Naive thymus-derived CD4-positive, alpha-beta T cell (primary cell): ENCODE measurements at regions of chr2 and their contacts with region 1.

Region 1: DNA sequence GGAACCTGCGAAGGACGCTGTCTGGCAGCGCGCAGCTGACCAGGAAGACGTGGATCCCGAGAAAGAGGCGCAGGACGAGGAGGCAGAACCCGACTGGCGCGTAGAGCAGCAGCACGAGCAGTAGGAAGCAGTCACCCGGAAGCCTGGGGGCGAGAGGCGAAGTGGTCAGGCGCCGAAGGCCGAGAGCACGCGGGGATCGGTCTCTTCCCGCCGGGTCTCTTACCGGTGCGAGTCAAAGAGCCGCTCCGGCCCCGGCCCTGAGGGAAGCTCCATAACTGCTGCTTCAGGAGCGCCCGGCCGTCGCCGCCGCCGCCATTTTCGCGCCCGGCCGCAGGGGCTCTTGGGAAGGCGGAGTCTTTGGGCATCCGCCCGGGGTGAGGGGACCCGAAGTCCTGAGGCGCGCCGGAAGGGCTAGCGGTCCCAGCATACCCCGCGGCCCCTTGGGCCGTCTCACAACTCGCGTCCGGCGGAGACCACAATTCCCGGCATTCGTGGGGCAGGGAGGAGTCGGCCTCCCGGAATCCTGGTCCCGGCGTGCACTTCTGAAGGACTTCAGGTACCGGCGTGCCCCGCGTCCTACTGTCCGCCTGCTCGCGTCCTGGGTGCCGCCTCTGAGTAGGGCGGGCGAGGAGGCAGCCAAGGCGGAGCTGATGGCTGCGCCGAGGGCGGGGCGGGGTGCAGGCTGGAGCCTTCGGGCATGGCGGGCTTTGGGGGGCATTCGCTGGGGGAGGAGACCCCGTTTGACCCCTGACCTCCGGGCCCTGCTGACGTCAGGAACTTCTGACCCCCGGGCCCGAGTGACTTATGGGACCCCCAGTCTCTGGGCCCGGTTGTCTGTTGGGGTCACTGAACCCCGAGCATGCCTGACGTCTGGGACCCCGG is at the starts of genes AUP1 and HTRA2:
- DNase-seq: peak; percentile 75 to 92 (median 83)
- ATAC-seq: peak; percentile 90
- H3K4me3 ChIP-seq: peak within 1 kb of the TSS; percentile 94
- H3K4me3 Mint-ChIP-seq: peak within 1 kb of the TSS; percentile 91 to 98 (median 94)
- H3K27ac ChIP-seq: peak within 1 kb of the TSS; percentile 85
- H3K27ac Mint-ChIP-seq: peak within 1 kb of the TSS; percentile 88 to 97 (median 93)
- H3K4me1 ChIP-seq: peaks cover 11 to 25% of the 10 kb centered on the region in 2 donors
- H3K4me1 Mint-ChIP-seq: peaks cover 25 to 50% (median 43%) of the 10 kb centered on the region in 7 donors
- H3K27me3 ChIP-seq: no peaks in the 10 kb centered on the region
- H3K27me3 Mint-ChIP-seq: no peaks in the 10 kb centered on the region
- total RNA-seq, gene AUP1: 121 to 160 (median 144) TPM
- total RNA-seq, gene HTRA2: 16.9 to 46.2 (median 37.7) TPM

Region 2: DNA sequence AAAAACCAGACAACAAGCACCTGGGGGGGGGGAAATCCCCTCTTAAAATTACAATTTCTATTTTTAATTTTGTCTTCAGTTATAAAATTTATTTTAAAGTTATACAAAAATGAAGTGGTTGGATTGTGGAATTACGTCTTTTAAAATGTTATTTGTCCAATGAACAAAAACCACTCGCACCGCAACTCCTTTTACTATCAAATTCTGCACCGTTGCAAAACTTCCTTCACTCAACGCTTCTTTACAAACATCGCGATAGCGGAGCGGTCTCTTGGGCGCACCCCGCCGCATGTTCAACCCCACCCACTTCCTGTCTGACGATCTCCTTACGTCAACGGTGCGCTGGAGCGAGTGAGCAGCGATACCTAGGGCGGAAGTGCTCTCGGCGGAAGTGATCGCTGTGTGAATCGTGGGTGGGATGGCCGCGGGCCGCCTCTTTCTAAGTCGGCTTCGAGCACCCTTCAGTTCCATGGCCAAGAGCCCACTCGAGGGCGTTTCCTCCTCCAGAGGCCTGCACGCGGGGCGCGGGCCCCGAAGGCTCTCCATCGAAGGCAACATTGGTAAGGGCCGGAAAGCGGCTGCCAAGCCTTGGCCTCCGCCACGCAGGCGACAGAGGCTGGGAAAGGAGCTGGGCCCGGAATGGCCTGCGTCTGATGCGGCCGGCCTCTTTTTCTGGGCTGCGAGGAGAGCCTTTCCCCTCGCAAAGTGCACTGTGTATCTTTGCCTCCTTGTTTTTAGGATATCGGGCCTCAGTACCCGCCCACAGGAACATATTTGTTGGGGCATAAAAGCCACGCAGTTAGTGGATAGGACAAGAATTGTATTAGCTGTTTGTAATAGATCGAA is 602.9 kb before region 1 on chr2 and contains the start of gene DGUOK:
- CTCF ChIA-PET with region 1: no interaction called
- POLR2A ChIA-PET with region 1: no interaction called
- intact Hi-C with region 1: loop called in 1 of 2 experiments (anchors 5 kb)
- DNase-seq: peak; percentile 81 to 99 (median 98)
- ATAC-seq: peak; percentile 99
- H3K4me3 ChIP-seq: peak within 1 kb of the TSS; percentile 87
- H3K4me3 Mint-ChIP-seq: peak within 1 kb of the TSS; percentile 80 to 97 (median 92)
- H3K27ac ChIP-seq: peak within 1 kb of the TSS; percentile 98
- H3K27ac Mint-ChIP-seq: peak within 1 kb of the TSS; percentile 79 to 99 (median 98)
- H3K4me1 ChIP-seq: peaks cover 37 to 41% of the 10 kb centered on the region in 2 donors
- H3K4me1 Mint-ChIP-seq: peaks cover 35 to 57% (median 52%) of the 10 kb centered on the region in 7 donors
- H3K27me3 ChIP-seq: no peaks in the 10 kb centered on the region
- H3K27me3 Mint-ChIP-seq: no peaks in the 10 kb centered on the region
- total RNA-seq, gene DGUOK: 43.1 to 73.9 (median 65.8) TPM

Region 3: DNA sequence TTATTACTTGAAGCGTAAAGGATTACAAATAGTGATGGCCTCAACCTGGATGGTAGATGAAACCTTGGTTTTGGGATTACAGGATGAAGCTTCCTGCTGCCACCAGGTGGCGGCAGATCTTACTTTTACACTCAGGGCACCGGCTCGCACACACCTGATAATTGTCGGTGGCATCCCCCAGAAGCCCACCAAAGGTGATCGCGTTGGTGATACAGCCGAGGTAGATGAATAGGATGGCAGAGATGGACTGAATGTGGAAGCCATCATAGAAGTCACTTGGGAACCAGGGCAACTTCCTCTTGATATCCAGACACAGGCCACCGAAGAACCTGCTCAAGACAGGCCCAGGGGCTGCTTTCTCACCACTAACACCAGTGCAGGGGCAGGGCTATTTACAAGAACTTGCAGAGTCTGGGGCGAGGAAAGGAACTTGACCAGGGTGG is 279.4 kb before region 1 on chr2:
- CTCF ChIA-PET with region 1: interaction called, 22 read pairs
- POLR2A ChIA-PET with region 1: no interaction called
- intact Hi-C with region 1: loop called (anchors 1 kb)
- DNase-seq: peak; percentile 33 to 65 (median 54)
- ATAC-seq: peak; percentile 70
- H3K4me3 ChIP-seq: no peak overlapping the region
- H3K4me3 Mint-ChIP-seq: peak overlapping the region in 1 of 10 donors; percentile 49
- H3K27ac ChIP-seq: no peak overlapping the region
- H3K27ac Mint-ChIP-seq: peak overlapping the region in 2 of 9 donors; percentile 62 to 84
- H3K4me1 ChIP-seq: no peaks in the 10 kb centered on the region
- H3K4me1 Mint-ChIP-seq: peaks cover 0 to 6% (median 0%) of the 10 kb centered on the region in 7 donors
- H3K27me3 ChIP-seq: no peaks in the 10 kb centered on the region
- H3K27me3 Mint-ChIP-seq: no peaks in the 10 kb centered on the region

Region 4: DNA sequence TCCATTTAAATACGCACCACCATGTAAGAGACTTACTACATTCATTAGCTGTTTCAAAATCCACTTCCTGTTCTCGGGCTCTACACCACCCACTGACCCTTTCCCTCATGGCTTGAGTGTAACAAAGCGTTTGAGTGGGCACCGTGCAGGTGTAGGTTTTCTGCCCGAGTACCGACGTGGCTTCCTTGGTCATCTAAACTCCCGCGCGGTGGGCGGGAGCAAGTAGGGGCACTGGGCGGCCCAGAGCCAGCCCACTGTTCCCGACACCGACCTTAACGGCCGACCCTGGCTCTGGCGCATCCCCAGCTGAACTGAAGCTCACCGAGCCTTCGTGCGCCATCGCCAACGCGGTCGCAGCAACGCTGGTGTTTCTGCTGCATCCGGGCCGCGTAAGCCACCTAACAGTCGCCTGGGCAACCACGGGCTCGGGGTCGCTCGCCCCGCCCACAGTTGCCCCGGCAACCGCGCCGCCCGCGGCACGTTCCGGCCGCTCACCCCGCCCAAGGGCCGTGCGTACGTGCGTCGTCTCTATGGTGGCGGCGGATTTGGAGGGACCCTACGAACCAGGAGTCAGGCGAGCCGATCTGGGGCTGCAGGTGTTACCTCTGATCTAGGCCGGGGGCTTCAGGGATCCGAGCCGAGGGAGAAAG is 108.3 kb before region 1 on chr2 and contains the starts of genes C2orf81 and WDR54:
- CTCF ChIA-PET with region 1: no interaction called
- POLR2A ChIA-PET with region 1: interaction called, 3 read pairs
- intact Hi-C with region 1: loop called (anchors 1 kb)
- DNase-seq: peak; percentile 86 to 96 (median 95)
- ATAC-seq: peak; percentile 97
- H3K4me3 ChIP-seq: peak within 1 kb of the TSS; percentile 96
- H3K4me3 Mint-ChIP-seq: peak within 1 kb of the TSS; percentile 90 to 100 (median 98)
- H3K27ac ChIP-seq: peak within 1 kb of the TSS; percentile 97
- H3K27ac Mint-ChIP-seq: peak within 1 kb of the TSS; percentile 96 to 100 (median 99)
- H3K4me1 ChIP-seq: peaks cover 4 to 19% of the 10 kb centered on the region in 2 donors
- H3K4me1 Mint-ChIP-seq: peaks cover 14 to 44% (median 36%) of the 10 kb centered on the region in 7 donors
- H3K27me3 ChIP-seq: no peaks in the 10 kb centered on the region
- H3K27me3 Mint-ChIP-seq: no peaks in the 10 kb centered on the region
- total RNA-seq, gene C2orf81: 4.3 to 10.5 (median 6.8) TPM
- total RNA-seq, gene WDR54: 26.5 to 78.5 (median 30.8) TPM

Region 5: DNA sequence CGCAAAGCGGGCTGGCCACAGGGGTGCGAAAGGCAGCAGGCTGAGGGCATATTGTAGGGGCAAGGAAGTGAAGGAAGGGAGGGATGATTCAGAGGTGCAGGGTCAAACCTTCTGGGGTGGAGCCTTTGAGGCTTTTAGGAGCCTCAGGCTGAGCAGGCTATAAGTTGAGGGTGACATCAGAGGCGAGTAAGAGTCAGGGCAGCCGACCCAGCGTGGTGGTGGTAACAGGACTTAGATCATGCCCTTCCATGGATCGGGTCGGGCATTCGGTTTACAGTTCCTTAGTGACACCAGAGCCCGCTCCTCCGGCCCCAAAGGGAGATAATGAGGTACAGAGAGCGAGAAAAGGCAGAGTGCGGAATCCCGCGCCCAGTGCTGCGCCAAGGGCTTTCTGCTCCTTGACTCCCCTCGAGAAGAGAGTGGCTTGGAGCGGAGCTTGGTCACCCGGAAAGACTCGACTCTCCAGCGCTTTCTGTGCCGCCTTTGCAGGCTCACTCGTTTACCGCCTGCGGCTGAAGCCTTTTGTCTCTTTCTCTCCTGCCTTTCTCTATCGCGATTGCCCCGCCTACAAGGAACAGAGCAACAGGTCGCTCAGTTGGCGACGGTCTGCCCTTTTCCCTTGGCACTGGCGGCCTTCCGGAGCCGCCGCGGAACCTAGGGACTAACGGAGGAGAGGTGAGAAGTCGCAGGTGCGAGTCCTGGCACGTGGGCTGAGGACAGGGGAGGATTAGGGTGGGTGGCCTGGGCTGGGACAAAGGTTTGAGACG is 30.9 kb before region 1 on chr2:
- CTCF ChIA-PET with region 1: no interaction called
- POLR2A ChIA-PET with region 1: interaction called, 11 read pairs
- intact Hi-C with region 1: loop called in 1 of 2 experiments (anchors 1 kb)
- DNase-seq: peak in 2 of 9 donors; percentile 29 to 37
- ATAC-seq: peak; percentile 52
- H3K4me3 ChIP-seq: peak overlapping the region; percentile 61
- H3K4me3 Mint-ChIP-seq: peak overlapping the region; percentile 63 to 97 (median 86)
- H3K27ac ChIP-seq: no peak overlapping the region
- H3K27ac Mint-ChIP-seq: peak overlapping the region in 4 of 9 donors; percentile 3 to 85 (median 33)
- H3K4me1 ChIP-seq: peaks cover 13 to 35% of the 10 kb centered on the region in 2 donors
- H3K4me1 Mint-ChIP-seq: peaks cover 20 to 45% (median 37%) of the 10 kb centered on the region in 7 donors
- H3K27me3 ChIP-seq: peaks cover 4 to 33% of the 10 kb centered on the region in 2 donors
- H3K27me3 Mint-ChIP-seq: peaks cover 39 to 58% (median 47%) of the 10 kb centered on the region in 5 donors

Region 6: GRCh38 chr2:74587664-74588277 is 58.2 kb after region 1 on chr2:
- CTCF ChIA-PET with region 1: interaction called, 10 read pairs
- POLR2A ChIA-PET with region 1: interaction called, 3 read pairs
- intact Hi-C with region 1: loop called (anchors 1 kb)
- DNase-seq: peak; percentile 27 to 74 (median 63)
- ATAC-seq: peak; percentile 85
- H3K4me3 ChIP-seq: no peak overlapping the region
- H3K4me3 Mint-ChIP-seq: no peak overlapping the region
- H3K27ac ChIP-seq: no peak overlapping the region
- H3K27ac Mint-ChIP-seq: peak overlapping the region in 1 of 9 donors; percentile 30
- H3K4me1 ChIP-seq: no peaks in the 10 kb centered on the region
- H3K4me1 Mint-ChIP-seq: peaks cover 8 to 35% (median 15%) of the 10 kb centered on the region in 7 donors
- H3K27me3 ChIP-seq: no peaks in the 10 kb centered on the region
- H3K27me3 Mint-ChIP-seq: peaks cover 8 to 26% (median 17%) of the 10 kb centered on the region in 5 donors

Region 7: GRCh38 chr2:74849228-74849892 is 319.8 kb after region 1 on chr2:
- CTCF ChIA-PET with region 1: no interaction called
- POLR2A ChIA-PET with region 1: no interaction called
- intact Hi-C with region 1: no loop called
- DNase-seq: peak in 8 of 9 donors; percentile 30 to 85 (median 76)
- ATAC-seq: peak; percentile 80
- H3K4me3 ChIP-seq: peak overlapping the region; percentile 11
- H3K4me3 Mint-ChIP-seq: peak overlapping the region; percentile 75 to 87 (median 82)
- H3K27ac ChIP-seq: peak overlapping the region; percentile 68
- H3K27ac Mint-ChIP-seq: peak overlapping the region; percentile 90 to 99 (median 97)
- H3K4me1 ChIP-seq: peaks cover 32 to 68% of the 10 kb centered on the region in 2 donors
- H3K4me1 Mint-ChIP-seq: peaks cover 72 to 93% (median 86%) of the 10 kb centered on the region in 7 donors
- H3K27me3 ChIP-seq: no peaks in the 10 kb centered on the region
- H3K27me3 Mint-ChIP-seq: no peaks in the 10 kb centered on the region